A673 (cell line): ENCODE measurements at regions of chr6 and their contacts with region 1.

Region 1: GRCh38 chr6:39361657-39362486 is 39.4 kb upstream of the KCNK16 start:
- DNase-seq: peak; percentile 80
- H3K4me3 ChIP-seq: no peak overlapping the region
- H3K27ac ChIP-seq: peak overlapping the region; percentile 63
- H3K4me1 ChIP-seq: peaks cover 21% of the 10 kb centered on the region
- H3K27me3 ChIP-seq: no peaks in the 10 kb centered on the region
- CTCF ChIP-seq: peak; percentile 58

Region 2: GRCh38 chr6:39377539-39377950 is 15.7 kb after region 1 on chr6:
- CTCF ChIA-PET with region 1: interaction called, 10 read pairs
- POLR2A ChIA-PET with region 1: no interaction called
- intact Hi-C with region 1: no loop called
- DNase-seq: peak; percentile 84
- H3K4me3 ChIP-seq: no peak overlapping the region
- H3K27ac ChIP-seq: no peak overlapping the region
- H3K4me1 ChIP-seq: no peaks in the 10 kb centered on the region
- H3K27me3 ChIP-seq: no peaks in the 10 kb centered on the region
- CTCF ChIP-seq: peak; percentile 82

Region 3: DNA sequence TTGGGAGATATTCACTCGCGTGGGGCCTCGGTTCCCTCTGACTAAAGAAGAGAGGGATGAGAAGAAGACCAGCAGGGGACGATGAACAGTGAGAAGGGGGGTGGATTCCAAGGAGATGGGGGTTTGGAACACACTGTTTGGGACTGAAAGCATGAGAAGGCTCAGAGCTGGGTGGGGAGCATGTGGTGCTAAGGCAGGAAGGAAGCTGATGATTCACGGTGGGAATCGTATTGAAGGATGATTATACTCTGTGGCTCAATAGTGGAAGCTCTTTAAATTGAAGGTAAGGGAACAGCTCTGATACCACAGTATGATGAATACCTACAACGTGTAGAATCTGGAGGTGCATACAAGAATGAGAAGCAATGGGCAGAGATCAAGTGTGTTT is 78.2 kb after region 1 on chr6:
- CTCF ChIA-PET with region 1: no interaction called
- POLR2A ChIA-PET with region 1: no interaction called
- intact Hi-C with region 1: no loop called
- DNase-seq: peak; percentile 66
- H3K4me3 ChIP-seq: no peak overlapping the region
- H3K27ac ChIP-seq: no peak overlapping the region
- H3K4me1 ChIP-seq: peaks cover 5% of the 10 kb centered on the region
- H3K27me3 ChIP-seq: no peaks in the 10 kb centered on the region
- CTCF ChIP-seq: no peak

Region 4: GRCh38 chr6:39980839-39981580 is 619.1 kb after region 1 on chr6:
- CTCF ChIA-PET with region 1: interaction called, 9 read pairs
- POLR2A ChIA-PET with region 1: no interaction called
- intact Hi-C with region 1: loop called (anchors 5 kb)
- DNase-seq: peak; percentile 71
- H3K4me3 ChIP-seq: no peak overlapping the region
- H3K27ac ChIP-seq: no peak overlapping the region
- H3K4me1 ChIP-seq: no peaks in the 10 kb centered on the region
- H3K27me3 ChIP-seq: no peaks in the 10 kb centered on the region
- CTCF ChIP-seq: peak; percentile 71

Region 5: DNA sequence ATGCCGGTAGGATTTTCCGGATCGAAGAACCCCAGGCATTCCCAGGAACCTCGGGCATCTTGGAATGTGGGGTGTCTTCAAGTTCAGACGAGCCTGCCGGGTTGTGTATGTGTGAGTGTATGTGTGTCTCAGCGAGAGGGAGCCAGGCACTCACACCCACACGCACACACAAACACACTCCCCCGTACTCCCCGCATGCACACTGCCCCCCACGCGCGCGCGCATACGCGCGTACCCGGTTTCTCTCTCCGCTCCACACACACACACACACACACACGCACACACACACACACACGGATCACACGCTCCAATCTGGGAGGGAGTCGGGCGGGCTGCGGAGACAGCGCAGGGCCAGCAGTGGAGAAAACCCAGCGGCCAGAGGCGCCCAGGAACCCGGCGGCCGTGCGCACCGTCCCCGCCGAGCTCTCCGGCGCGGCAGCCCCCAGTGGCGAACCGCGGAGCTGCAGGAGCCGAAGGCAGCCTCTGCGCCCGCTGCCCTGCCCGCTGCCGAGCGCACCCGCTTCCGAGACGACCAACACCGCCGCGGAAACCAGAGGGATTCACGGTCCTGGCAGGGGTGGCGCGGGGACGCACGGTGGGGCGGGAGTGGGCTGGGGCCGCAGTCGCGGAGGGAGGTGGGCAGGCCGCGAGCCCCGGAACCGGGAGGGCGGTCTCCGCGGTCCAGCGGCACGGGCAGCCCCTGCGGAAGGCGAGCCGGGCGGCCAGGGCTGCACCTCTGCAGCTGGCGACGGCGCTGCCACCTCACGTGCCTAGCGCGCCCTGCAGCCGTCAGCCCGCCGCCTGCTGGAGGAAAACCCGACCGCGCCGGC is 1225.6 kb after region 1 on chr6 and contains the start of gene LRFN2:
- CTCF ChIA-PET with region 1: no interaction called
- POLR2A ChIA-PET with region 1: no interaction called
- intact Hi-C with region 1: loop called (anchors 5 kb)
- DNase-seq: peak; percentile 93
- H3K4me3 ChIP-seq: peak within 1 kb of the TSS; percentile 90
- H3K27ac ChIP-seq: peak within 1 kb of the TSS; percentile 89
- H3K4me1 ChIP-seq: peaks cover 35% of the 10 kb centered on the region
- H3K27me3 ChIP-seq: no peaks in the 10 kb centered on the region
- CTCF ChIP-seq: peak; percentile 68
- total RNA-seq, gene LRFN2: 22.3 and 26.6 TPM in 2 replicates

Region 6: GRCh38 chr6:41027799-41028628 is 1666.1 kb after region 1 on chr6:
- CTCF ChIA-PET with region 1: interaction called, 3 read pairs
- POLR2A ChIA-PET with region 1: no interaction called
- intact Hi-C with region 1: loop called (anchors 5 kb)
- DNase-seq: peak; percentile 53
- H3K4me3 ChIP-seq: peak overlapping the region; percentile 31
- H3K27ac ChIP-seq: no peak overlapping the region
- H3K4me1 ChIP-seq: no peaks in the 10 kb centered on the region
- H3K27me3 ChIP-seq: no peaks in the 10 kb centered on the region
- CTCF ChIP-seq: peak; percentile 99